Posterior vena cava (tissue), 2 donors: ENCODE measurements at regions of chr11 and their contacts with region 1.

Region 1: DNA sequence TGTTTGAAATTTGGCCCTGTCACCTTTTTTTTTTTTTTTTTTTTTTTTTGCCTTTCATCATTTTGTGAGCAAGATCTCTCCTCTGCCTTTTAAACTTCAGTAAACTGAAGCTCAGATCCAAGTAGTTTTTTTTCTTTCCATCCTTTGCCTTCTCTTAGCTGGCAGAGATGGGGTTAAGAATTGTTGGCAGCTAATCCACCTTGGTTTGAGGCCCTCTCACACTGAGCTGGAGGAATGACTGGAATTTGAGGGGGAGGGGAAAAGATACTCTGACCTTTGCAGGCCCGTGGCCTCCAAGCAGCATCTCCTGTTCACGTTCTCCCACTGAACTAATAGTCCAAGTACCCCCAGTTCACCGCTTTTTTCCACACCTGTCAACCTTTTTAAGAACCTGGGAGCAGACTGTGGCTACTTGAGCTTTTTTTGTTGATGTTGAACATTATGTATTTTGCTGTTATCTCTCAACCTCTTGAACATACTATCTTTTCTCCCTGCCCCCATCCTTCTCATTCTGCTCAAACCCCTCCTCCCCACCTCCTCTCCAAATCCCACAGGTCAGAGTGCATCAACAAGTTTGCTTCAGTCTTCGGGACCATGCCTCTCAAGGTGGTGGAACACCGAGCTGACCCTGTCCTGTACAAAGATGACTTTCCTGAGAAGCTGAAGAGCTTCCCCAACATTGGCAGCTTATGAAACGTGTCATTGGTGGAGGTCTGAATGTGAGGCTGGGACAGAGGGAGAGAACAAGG is 66.2 kb downstream of the ALX4 start:
- DNase-seq: no peak

Region 2: DNA sequence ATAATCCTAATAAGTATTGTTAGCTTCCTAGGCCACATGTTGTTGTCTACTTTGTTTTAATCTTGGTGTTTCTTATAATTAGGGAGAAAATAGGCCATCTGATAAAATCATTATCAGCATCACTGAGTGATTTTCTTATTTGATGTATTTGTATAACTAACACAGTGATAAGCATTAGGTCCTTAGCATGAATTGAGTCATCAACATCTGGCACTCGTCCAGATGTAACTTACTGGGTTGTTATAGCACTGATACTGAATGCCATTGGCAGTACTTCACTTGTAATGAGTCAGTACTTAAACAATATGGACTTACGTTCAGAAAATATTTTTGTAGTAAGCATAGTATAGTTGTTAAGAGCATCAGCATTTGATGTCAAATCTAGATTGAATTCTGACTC is 915.8 kb before region 1 on chr11:
- intact Hi-C with region 1: loop called in 1 of 2 experiments (anchors 5 kb)
- DNase-seq: no peak

Region 3: GRCh38 chr11:45390407-45390806 is 1146.6 kb after region 1 on chr11:
- intact Hi-C with region 1: no loop called
- DNase-seq: no peak